Activated B cell treated with CpG ODN at 0.5 μM for 24 hours (primary cell): ENCODE measurements at regions of chr20 and their contacts with region 1.

Region 1: GRCh38 chr20:32697608-32698007 is 23.9 kb upstream of the C20orf203 start:
- DNase-seq: no peak
- ATAC-seq: no peak
- H3K4me3 Mint-ChIP-seq: no peak overlapping the region
- H3K27ac Mint-ChIP-seq: no peak overlapping the region
- H3K4me1 Mint-ChIP-seq: no peaks in the 10 kb centered on the region
- H3K27me3 Mint-ChIP-seq: no peaks in the 10 kb centered on the region
- CTCF ChIP-seq: no peak

Region 2: DNA sequence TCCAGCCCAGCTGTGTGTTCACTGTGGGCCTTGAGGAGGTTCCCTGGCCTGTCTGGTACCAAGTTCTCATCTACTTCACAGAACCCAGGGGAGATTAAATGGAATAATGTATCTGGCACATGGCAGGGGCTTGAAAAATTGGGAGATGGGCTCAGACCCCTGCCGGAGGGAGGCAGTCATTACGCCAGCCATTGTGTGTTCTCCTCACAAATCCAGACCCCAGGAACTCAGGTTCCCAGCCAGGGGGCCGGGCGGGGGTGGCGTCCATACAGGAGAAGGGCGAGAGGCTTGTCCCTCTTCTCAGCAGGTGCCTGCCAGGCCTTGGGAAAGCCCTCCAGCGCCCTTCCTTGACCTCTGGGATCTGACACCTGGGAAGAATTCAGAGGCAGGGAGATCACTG is 120.6 kb before region 1 on chr20:
- CTCF ChIA-PET with region 1: no interaction called
- POLR2A ChIA-PET with region 1: interaction called, 10 read pairs
- intact Hi-C with region 1: no loop called
- DNase-seq: no peak
- ATAC-seq: no peak
- H3K4me3 Mint-ChIP-seq: no peak overlapping the region
- H3K27ac Mint-ChIP-seq: no peak overlapping the region
- H3K4me1 Mint-ChIP-seq: peaks cover 14% of the 10 kb centered on the region
- H3K27me3 Mint-ChIP-seq: peaks cover 4% of the 10 kb centered on the region
- CTCF ChIP-seq: no peak